ENCODE measurements at regions of chr7 and their contacts with region 1.

Region 1: GRCh38 chr7:6691609-6692106 is 15.1 kb downstream of the ZNF12 start:
- DNase-seq: no peak
- ATAC-seq: no peak
- H3K4me3 ChIP-seq: no peak overlapping the region
- H3K27ac ChIP-seq: no peak overlapping the region
- H3K4me1 ChIP-seq: no peaks in the 10 kb centered on the region
- H3K27me3 ChIP-seq: no peaks in the 10 kb centered on the region
- CTCF ChIP-seq: no peak
- EP300 ChIP-seq: no peak
- POLR2A ChIP-seq: no peak
- RAD21 ChIP-seq: no peak

Region 2: GRCh38 chr7:5064391-5065106 is 1627.1 kb before region 1 on chr7:
- CTCF ChIA-PET with region 1: no interaction called
- POLR2A ChIA-PET with region 1: no interaction called
- RAD21 ChIA-PET with region 1: no interaction called
- SMC1A ChIA-PET with region 1: no interaction called
- in situ Hi-C with region 1: loop called (anchors 10 kb)
- intact Hi-C with region 1: no loop called
- DNase-seq: no peak
- ATAC-seq: no peak
- H3K4me3 ChIP-seq: no peak overlapping the region
- H3K27ac ChIP-seq: no peak overlapping the region
- H3K4me1 ChIP-seq: no peaks in the 10 kb centered on the region
- H3K27me3 ChIP-seq: no peaks in the 10 kb centered on the region
- CTCF ChIP-seq: no peak
- EP300 ChIP-seq: no peak
- POLR2A ChIP-seq: no peak
- RAD21 ChIP-seq: no peak

Region 3: GRCh38 chr7:6718124-6718523 is 26.5 kb after region 1 on chr7:
- CTCF ChIA-PET with region 1: no interaction called
- POLR2A ChIA-PET with region 1: no interaction called
- RAD21 ChIA-PET with region 1: no interaction called
- SMC1A ChIA-PET with region 1: no interaction called
- in situ Hi-C with region 1: no loop called
- intact Hi-C with region 1: no loop called
- DNase-seq: no peak
- ATAC-seq: no peak
- H3K4me3 ChIP-seq: no peak overlapping the region
- H3K27ac ChIP-seq: no peak overlapping the region
- H3K4me1 ChIP-seq: no peaks in the 10 kb centered on the region
- H3K27me3 ChIP-seq: no peaks in the 10 kb centered on the region
- CTCF ChIP-seq: peak; percentile 6 to 19 (median 13); a peak in 1 of 6 replicates
- EP300 ChIP-seq: no peak
- POLR2A ChIP-seq: no peak
- RAD21 ChIP-seq: peak; percentile 41